Heart right ventricle (tissue), 16 donors: ENCODE measurements at regions of chr6 and their contacts with region 1.

Region 1: DNA sequence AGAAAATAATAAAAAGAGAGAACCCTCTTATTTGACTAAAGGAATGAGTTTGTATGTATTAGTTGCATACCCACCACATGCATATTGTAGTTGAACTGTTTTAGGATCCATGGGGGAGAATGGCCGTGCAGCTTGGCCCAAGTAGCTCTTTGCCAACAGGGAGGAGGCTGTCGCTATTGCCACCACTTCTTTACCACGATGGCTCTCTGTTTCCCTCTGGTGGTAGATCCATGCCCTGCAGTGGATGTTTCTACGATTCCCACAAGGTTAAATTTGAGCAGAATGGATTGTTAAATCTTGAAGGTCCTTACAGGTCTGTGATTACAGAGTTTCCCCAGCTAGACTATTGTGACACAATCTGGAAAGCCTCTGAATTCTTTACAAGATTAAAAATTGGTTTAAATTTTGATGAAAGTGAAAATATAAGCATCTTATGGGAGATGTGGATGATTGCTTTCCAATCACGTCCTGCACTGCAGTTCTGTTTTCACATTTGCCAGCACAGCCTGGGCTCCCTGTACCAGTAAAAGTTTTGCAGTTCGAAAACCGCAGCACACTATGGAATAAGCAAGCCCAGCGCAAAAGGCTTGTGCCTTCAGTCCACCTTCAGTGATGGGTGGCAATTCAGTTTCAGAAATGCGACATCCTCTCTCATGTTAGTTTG is 34.4 kb upstream of the FNDC1 start:
- DNase-seq: peak in 1 of 2 donors; percentile 60
- ATAC-seq: peak; percentile 56 to 79 (median 73)
- H3K4me3 ChIP-seq: no peak overlapping the region
- H3K27ac ChIP-seq: no peak overlapping the region
- H3K4me1 ChIP-seq: no peaks in the 10 kb centered on the region
- H3K27me3 ChIP-seq: peaks cover 0 to 25% (median 5%) of the 10 kb centered on the region in 7 donors
- CTCF ChIP-seq: peak; percentile 74 to 97 (median 90)

Region 2: DNA sequence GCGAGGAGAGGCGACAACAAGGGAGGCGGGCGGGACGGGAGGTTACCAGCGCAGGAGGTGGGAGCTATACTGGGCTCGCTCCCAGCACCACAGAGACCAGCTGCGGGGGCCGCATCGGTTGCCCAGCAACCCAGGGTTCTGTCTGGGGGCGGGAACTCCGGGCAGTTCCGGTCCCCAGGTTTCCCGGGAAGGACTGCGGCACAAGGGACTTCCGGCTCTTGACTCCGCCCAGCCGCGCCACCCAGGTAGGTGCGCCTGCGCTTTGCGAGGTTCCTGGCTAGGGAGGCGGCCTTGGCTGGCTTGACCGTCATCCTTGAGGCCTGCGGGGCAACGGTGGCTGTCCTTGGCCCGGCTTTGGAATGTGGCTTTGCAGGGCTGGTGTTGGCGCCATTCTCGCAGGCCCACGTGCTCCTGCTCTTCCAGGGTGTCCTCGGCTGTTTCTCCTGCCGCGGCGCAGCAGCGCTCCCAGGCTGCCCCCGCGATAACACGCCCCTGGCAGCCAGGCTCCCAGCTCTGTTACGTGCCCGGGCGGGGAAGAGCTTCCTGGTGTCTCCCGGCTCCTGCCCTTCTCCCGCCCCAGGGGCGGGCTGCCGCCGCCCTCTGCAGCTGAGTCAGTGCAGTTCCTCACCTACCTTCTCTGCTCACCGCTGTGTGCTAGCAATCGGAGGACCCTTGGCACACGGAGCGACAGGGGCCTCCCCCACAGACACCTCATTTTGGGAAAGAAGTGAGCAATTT is 135.0 kb before region 1 on chr6 and contains the start of gene RSPH3:
- intact Hi-C with region 1: loop called in 6 of 10 experiments (anchors 5 to 10 kb)
- DNase-seq: peak; percentile 90 to 92
- ATAC-seq: peak; percentile 94 to 98 (median 97)
- H3K4me3 ChIP-seq: peak within 1 kb of the TSS; percentile 51 to 90 (median 74)
- H3K27ac ChIP-seq: peak within 1 kb of the TSS; percentile 19 to 90 (median 82)
- H3K4me1 ChIP-seq: peaks cover 4 to 42% (median 9%) of the 10 kb centered on the region in 9 donors
- H3K27me3 ChIP-seq: no peaks in the 10 kb centered on the region
- CTCF ChIP-seq: peak in 3 of 9 donors; percentile 38 to 47 (median 41)
- total RNA-seq, gene RSPH3: 7.2 to 11.7 (median 10.3) TPM

Region 3: GRCh38 chr6:159008656-159009288 is 126.1 kb before region 1 on chr6:
- intact Hi-C with region 1: loop called in 9 of 10 experiments (anchors 1 to 10 kb)
- DNase-seq: no peak
- ATAC-seq: peak in 5 of 8 donors; percentile 22 to 58 (median 47)
- H3K4me3 ChIP-seq: peak overlapping the region in 1 of 10 donors; percentile 20
- H3K27ac ChIP-seq: peak overlapping the region in 1 of 10 donors; percentile 46
- H3K4me1 ChIP-seq: peaks cover 0 to 30% (median 0%) of the 10 kb centered on the region in 9 donors
- H3K27me3 ChIP-seq: no peaks in the 10 kb centered on the region
- CTCF ChIP-seq: peak; percentile 15 to 58 (median 48)

Region 4: GRCh38 chr6:159042003-159042825 is 92.6 kb before region 1 on chr6:
- intact Hi-C with region 1: loop called (anchors 1 to 10 kb)
- DNase-seq: peak in 1 of 2 donors; percentile 59
- ATAC-seq: peak; percentile 68 to 83 (median 76)
- H3K4me3 ChIP-seq: peak overlapping the region in 6 of 10 donors; percentile 10 to 66 (median 27)
- H3K27ac ChIP-seq: peak overlapping the region in 5 of 10 donors; percentile 18 to 90 (median 30)
- H3K4me1 ChIP-seq: peaks cover 0 to 60% (median 7%) of the 10 kb centered on the region in 9 donors
- H3K27me3 ChIP-seq: no peaks in the 10 kb centered on the region
- CTCF ChIP-seq: peak; percentile 70 to 97 (median 93)